Heart left ventricle (tissue), 16 donors: ENCODE measurements at regions of chr9 and their contacts with region 1.

Region 1: GRCh38 chr9:105299190-105299854 is 54.9 kb downstream of the SLC44A1 start:
- DNase-seq: peak in 1 of 5 donors; percentile 28
- ATAC-seq: peak; percentile 57 to 96 (median 81)
- H3K4me3 ChIP-seq: no peak overlapping the region
- H3K27ac ChIP-seq: peak overlapping the region in 7 of 12 donors; percentile 15 to 73 (median 31)
- H3K4me1 ChIP-seq: peaks cover 0 to 34% (median 14%) of the 10 kb centered on the region in 12 donors
- H3K27me3 ChIP-seq: no peaks in the 10 kb centered on the region
- CTCF ChIP-seq: no peak
- POLR2A ChIP-seq: no peak

Region 2: DNA sequence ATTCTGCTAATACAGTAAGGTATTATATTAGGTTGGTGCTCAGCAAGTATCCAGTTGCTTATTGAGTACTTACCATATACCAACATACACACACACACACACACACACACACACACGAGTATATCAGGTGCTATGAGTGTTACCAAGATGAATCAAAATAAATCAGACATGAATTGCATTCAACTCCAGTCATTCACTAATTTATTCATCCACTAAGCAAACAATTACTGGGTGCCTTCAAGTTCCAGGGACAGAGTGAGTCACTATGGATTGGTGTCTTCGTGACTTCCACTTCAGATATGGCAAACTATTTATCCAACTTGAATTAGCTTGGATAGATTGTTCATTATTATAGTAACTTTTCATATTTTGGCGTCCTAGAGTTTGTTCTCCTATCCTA is 195.5 kb before region 1 on chr9:
- intact Hi-C with region 1: no loop called
- DNase-seq: no peak
- ATAC-seq: no peak
- H3K4me3 ChIP-seq: no peak overlapping the region
- H3K27ac ChIP-seq: no peak overlapping the region
- H3K4me1 ChIP-seq: no peaks in the 10 kb centered on the region
- H3K27me3 ChIP-seq: no peaks in the 10 kb centered on the region
- CTCF ChIP-seq: no peak
- POLR2A ChIP-seq: no peak

Region 3: DNA sequence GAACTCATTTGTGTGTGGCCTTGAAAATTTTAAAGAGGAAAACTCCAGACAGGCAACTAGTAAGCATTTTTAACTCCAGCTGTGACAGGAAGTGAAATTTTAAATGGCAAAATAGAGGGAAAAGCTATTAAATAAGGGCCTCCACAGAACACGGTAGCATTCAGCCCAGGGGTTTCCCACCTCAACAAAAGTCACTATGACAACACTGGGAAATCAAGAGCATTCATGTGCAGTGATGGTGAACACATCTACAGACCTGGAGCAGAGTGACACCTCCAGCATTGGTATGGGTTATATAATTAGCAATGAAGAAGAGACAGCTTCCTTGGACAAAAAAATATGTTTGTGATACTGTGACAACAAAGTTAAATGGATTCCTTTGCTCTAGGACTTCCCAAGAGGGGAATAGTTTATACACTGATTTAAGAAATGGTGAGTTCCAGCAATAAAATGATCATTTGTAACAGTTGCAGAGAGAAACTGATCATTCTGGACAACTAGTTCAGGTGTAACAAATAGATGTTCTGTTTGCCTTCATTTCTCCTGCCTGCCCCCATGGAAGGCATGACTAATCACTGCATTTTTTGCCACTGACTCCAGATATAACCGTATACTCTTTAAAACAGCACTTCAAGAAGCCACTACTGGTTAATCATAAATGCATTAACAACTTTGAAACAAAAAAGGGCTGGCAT is 148.2 kb before region 1 on chr9:
- intact Hi-C with region 1: no loop called
- DNase-seq: no peak
- ATAC-seq: no peak
- H3K4me3 ChIP-seq: no peak overlapping the region
- H3K27ac ChIP-seq: no peak overlapping the region
- H3K4me1 ChIP-seq: peaks cover 0 to 18% (median 0%) of the 10 kb centered on the region in 12 donors
- H3K27me3 ChIP-seq: no peaks in the 10 kb centered on the region
- CTCF ChIP-seq: no peak
- POLR2A ChIP-seq: no peak

Region 4: DNA sequence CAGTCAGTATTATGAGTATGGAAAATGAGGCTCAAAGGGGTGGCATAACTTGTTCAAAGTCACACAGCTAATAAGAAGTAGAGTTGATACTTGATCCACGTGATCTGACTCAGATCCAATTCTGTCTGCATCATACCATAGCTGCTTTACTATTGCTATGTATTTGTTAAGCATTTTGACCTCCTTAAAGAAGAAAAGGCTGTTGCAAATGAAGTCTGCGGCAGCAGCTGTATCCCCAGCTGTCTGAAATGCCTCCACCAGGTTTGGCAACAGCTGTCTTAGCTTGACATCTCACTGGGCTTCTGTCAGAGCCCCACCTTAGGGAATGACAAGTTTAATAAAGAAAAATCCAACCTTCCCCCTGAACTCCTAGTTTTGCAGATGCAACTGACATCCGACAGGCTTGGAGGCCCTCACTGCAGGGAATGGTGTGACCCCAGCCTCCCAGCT is 130.4 kb before region 1 on chr9:
- intact Hi-C with region 1: loop called in 1 of 10 experiments (anchors 10 kb)
- DNase-seq: peak in 2 of 5 donors; percentile 31 to 42
- ATAC-seq: peak in 2 of 4 donors; percentile 49 to 73
- H3K4me3 ChIP-seq: no peak overlapping the region
- H3K27ac ChIP-seq: no peak overlapping the region
- H3K4me1 ChIP-seq: peaks cover 0 to 9% (median 0%) of the 10 kb centered on the region in 12 donors
- H3K27me3 ChIP-seq: no peaks in the 10 kb centered on the region
- CTCF ChIP-seq: no peak
- POLR2A ChIP-seq: no peak

Region 5: DNA sequence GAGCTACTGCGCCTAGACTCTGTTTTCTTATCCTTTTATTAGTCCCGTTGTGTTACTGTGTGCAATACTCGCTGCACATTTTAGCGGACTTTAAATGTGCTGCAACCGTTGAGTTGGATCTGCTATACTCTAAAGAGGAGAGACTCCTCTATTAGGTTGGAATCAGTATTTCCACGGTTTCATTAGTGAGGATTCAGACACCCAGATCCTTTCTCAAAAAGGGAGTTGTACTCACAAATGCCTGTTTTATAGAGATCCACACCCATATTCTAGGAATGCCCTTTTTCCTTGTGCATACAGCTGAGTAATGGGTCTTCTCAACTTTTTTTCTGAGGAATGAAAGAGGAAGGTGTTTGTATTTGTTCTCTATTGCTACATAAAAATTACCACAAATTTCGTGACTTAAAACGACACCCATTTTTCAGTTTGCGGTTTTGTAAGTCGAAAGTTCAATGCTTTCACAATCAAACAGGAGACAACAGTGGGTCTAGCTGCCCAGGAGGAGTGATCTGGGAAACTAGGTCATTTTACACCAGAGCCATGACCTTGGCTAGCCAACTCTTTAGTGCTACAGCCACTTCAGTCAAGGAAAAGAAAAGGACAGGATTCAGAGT is 107.7 kb before region 1 on chr9:
- intact Hi-C with region 1: no loop called
- DNase-seq: no peak
- ATAC-seq: peak in 2 of 4 donors; percentile 69 to 80
- H3K4me3 ChIP-seq: no peak overlapping the region
- H3K27ac ChIP-seq: no peak overlapping the region
- H3K4me1 ChIP-seq: peaks cover 0 to 22% (median 0%) of the 10 kb centered on the region in 12 donors
- H3K27me3 ChIP-seq: no peaks in the 10 kb centered on the region
- CTCF ChIP-seq: no peak
- POLR2A ChIP-seq: no peak

Region 6: GRCh38 chr9:105355781-105356180 is 56.5 kb after region 1 on chr9:
- intact Hi-C with region 1: loop called in 1 of 10 experiments (anchors 10 kb)
- DNase-seq: no peak
- ATAC-seq: no peak
- H3K4me3 ChIP-seq: no peak overlapping the region
- H3K27ac ChIP-seq: no peak overlapping the region
- H3K4me1 ChIP-seq: peaks cover 0 to 4% (median 0%) of the 10 kb centered on the region in 12 donors
- H3K27me3 ChIP-seq: no peaks in the 10 kb centered on the region
- CTCF ChIP-seq: peak in 1 of 12 donors; percentile 9
- POLR2A ChIP-seq: no peak